PC-9 (cell line): ENCODE measurements at regions of chr3 and their contacts with region 1.

Region 1: DNA sequence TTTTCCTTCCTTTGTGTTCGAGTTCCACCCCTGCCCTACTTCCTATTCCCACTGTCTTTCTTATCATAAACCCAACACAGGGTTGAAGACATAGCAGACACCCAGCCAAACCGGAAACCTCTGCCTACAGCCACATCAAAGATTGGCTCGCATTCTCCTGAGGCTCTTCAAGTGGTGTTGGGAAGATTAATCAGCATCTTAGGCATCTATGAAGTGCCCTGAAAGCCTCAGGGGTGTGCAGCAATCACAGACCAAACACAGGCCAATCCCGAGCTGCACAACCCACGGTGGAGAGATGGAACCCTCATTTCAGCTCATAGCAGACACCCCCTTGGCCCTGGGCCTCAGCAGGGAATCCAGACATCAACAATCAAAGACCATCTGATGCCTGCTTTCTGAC is 255.9 kb downstream of the XXYLT1 start:
- DNase-seq: peak in 1 of 2 experiments; percentile 78
- H3K4me3 ChIP-seq: no peak overlapping the region
- H3K27ac ChIP-seq: no peak overlapping the region
- H3K4me1 ChIP-seq: peaks cover 36% of the 10 kb centered on the region
- H3K27me3 ChIP-seq: no peaks in the 10 kb centered on the region; the same call in 1 of the 2 replicates
- CTCF ChIP-seq: no peak

Region 2: GRCh38 chr3:194058189-194058571 is 956.8 kb before region 1 on chr3:
- CTCF ChIA-PET with region 1: no interaction called
- POLR2A ChIA-PET with region 1: interaction called, 14 read pairs
- intact Hi-C with region 1: no loop called
- DNase-seq: peak in 1 of 2 experiments; percentile 41
- H3K4me3 ChIP-seq: no peak overlapping the region
- H3K27ac ChIP-seq: no peak overlapping the region
- H3K4me1 ChIP-seq: peaks cover 12% of the 10 kb centered on the region
- H3K27me3 ChIP-seq: no peaks in the 10 kb centered on the region
- CTCF ChIP-seq: no peak